ENCODE measurements at regions of chr7 and their contacts with region 1.

Region 1: GRCh38 chr7:85041605-85042216 is 145.1 kb downstream of the SEMA3D start:
- DNase-seq: no peak
- CTCF ChIP-seq: peak; percentile 61

Region 2: DNA sequence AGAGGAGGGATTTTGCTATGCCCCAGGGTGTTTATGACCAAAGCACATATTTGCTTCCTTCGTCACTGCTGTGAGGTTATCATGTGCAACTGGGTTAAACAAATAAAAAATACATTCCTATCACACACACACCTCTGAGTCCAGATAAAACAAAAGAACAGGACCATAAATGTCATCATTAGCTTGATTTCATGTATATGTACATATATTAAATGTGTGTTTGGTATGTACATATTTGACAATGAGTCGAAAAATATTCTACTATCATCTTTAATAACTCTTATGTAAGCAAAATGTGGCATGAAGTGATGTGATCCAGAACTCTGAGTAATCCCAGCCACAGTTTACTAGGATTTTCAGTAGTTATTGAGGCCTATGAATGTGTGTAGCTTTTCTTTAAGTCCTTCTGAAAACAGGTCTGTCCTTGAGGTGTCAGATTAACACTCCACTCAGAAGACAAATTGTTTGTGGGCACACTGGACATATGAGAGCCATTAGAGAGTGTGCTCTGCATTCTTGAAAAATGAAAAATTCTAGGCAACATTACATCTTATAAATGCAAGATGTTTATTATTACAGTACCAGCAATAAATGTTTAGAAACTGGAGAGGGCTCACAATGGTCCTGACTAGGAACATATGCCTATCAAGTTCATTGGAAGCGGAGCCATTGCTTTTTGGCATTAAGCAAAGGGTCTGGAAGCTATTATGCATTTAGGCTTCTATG is 512.1 kb before region 1 on chr7:
- in situ Hi-C with region 1: no loop called
- DNase-seq: no peak
- CTCF ChIP-seq: no peak

Region 3: GRCh38 chr7:84950836-84951235 is 90.9 kb before region 1 on chr7:
- in situ Hi-C with region 1: no loop called
- DNase-seq: no peak
- CTCF ChIP-seq: no peak

Region 4: GRCh38 chr7:85554236-85555178 is 512.8 kb after region 1 on chr7:
- in situ Hi-C with region 1: loop called (anchors 25 kb)
- DNase-seq: no peak
- CTCF ChIP-seq: peak; percentile 58

Region 5: GRCh38 chr7:85659364-85659763 is 617.7 kb after region 1 on chr7:
- in situ Hi-C with region 1: no loop called
- DNase-seq: no peak
- CTCF ChIP-seq: no peak

Region 6: DNA sequence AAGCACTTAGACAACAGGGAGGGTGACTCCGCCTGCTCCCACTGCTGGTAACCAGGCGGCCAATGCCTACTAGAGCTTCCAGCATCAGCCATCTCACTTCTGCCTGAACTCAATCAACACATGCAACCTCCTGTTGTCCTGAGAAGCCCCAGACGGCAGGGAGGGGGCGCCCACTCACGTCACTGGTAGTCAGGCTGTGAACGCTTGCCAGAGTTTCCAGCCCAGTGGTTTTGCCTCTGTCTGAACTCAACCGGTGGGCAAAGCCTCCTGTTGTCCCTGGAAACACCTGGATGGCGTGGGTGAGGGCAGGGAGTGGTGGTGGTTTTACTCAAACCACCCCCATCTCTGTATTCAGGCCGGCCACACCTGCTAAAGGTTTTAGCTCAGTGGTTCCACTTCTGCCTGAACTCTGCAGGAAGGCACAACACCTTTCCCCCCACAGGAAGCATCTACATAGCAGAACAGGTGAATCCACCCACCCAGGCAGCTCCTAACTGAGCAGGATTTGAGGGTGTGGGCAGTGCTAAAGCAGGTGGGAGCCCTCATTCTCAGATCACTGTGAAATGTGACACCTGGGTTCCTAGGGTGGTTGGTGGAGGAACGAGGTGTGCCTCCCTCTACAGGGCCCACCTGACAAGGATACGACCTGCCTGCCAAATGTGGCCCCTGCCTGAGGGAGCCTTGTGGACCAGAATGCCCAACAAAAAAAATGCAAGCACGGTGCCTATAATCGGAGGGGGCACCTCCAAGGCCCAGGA is 708.2 kb after region 1 on chr7:
- in situ Hi-C with region 1: loop called (anchors 25 kb)
- DNase-seq: no peak
- CTCF ChIP-seq: no peak